CD8-positive, alpha-beta memory T cell (primary cell): ENCODE measurements at regions of chr4 and their contacts with region 1.

Region 1: DNA sequence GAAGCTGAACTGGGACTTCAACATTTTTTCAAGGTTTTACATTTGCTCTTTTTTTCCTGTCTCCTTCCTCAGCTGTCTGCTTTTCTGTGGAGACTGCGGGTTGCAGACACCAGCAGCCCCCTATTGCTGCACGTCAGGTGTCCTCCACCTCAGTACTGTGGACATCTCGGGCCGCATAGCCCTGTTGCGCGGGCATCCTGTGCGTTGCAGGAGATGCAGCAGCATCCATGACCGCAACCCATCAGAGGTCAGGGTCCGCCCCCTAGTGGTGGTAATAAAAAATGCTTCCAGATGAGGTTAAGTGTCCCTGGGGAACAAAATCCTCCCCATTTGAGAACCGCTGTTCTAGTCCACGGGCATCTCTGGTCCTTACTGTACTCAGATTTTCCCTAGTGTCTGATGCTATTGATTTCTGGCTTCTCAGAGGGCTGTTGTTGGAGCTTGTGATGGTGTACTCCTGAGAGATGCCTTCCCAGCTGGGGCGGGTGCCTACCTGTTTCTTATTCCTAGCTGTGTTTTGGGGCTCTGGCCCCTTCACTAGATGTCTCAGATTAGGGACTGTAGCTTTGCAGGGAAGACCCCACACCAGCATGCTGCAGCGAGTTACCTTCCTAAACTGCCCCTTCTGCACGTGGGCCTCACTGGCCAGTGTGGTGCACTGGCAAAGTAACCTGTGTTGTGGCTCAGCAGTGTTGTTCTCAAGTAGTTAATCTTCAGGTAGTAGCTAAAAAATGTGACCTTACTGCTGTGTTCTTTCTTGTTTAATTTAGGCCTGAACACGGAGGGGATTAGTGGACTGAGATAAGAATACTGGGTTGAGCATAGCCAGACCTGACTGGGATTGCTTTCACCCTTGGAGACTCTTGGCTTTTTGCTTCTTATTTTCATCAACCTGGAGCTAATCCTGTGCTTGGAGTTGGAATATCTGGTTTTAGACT is 28.2 kb downstream of the NSD2 start:
- DNase-seq: peak; percentile 51 to 82 (median 68)
- H3K4me3 ChIP-seq: no peak overlapping the region
- H3K4me3 Mint-ChIP-seq: no peak overlapping the region
- H3K27ac ChIP-seq: no peak overlapping the region
- H3K27ac Mint-ChIP-seq: peak overlapping the region in 5 of 8 donors; percentile 4 to 77 (median 66)
- H3K4me1 ChIP-seq: peaks cover 5% of the 10 kb centered on the region
- H3K4me1 Mint-ChIP-seq: peaks cover 9 to 24% (median 14%) of the 10 kb centered on the region in 3 donors
- H3K27me3 ChIP-seq: no peaks in the 10 kb centered on the region
- H3K27me3 Mint-ChIP-seq: peaks cover 0 to 2% of the 10 kb centered on the region in 2 donors

Region 2: DNA sequence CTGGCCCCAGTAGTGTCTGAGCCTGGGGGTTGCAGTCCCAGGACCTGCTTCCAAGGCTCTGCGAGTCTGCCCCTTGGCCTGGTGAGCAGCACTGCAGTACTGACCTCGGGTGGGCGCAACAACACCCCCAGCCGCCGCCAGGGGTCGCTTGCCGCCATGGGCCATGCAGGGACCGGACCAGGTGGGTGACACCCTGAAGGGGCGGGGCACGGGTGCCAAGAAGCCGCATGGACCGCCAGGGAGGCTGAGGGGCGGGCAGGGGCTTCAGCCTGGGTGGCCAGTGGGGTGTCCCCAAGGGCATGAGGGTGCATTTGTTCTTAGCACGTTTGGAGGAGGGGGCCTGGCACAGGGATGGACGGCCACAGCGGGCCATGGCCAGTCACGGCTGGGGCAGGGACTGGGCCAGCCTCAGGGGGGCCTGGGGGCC is 153.1 kb before region 1 on chr4:
- CTCF ChIA-PET with region 1: interaction called, 126 read pairs
- POLR2A ChIA-PET with region 1: no interaction called
- DNase-seq: peak; percentile 60 to 80 (median 68)
- H3K4me3 ChIP-seq: no peak overlapping the region
- H3K4me3 Mint-ChIP-seq: no peak overlapping the region
- H3K27ac ChIP-seq: no peak overlapping the region
- H3K27ac Mint-ChIP-seq: no peak overlapping the region
- H3K4me1 ChIP-seq: no peaks in the 10 kb centered on the region
- H3K4me1 Mint-ChIP-seq: peaks cover 0 to 3% (median 0%) of the 10 kb centered on the region in 3 donors
- H3K27me3 ChIP-seq: no peaks in the 10 kb centered on the region
- H3K27me3 Mint-ChIP-seq: peaks cover 0 to 1% of the 10 kb centered on the region in 2 donors

Region 3: DNA sequence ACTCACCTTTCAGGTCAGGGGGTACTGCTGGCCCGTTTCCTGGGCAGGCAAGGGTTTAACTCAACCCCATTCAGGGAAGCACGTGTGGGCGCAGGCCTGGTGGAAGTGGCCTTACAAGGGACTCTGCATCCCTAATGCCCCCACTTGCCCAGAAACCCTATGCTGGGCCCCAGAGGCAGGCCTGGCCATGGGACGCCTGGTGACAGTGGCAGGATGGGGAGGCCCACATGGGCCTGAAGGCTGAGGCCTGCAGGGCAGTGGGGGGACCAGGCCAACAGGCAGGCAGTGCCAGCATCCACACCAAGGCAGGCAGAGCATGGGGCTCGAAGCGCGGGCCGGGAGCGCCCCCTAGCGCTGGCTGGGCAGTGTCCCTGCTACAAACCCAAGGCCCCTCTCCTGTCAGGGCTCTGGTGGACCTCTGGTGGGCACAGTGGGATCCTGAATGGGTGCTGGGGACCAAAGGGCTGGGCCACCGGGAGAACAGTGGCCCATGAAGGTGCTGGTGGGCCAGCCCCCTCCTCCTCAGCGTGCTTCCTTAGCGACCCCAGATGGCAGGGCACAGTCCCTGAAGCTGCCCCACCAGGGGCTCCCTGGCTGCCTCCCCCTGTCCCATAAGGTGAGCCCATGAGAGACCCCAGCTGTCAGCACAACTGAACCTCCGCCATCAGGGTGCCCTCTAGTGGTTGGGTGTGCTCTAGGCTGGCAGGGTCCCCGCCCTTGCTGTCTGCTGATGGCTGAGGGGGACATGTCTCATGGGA is 89.5 kb before region 1 on chr4:
- CTCF ChIA-PET with region 1: interaction called, 12 read pairs
- POLR2A ChIA-PET with region 1: no interaction called
- DNase-seq: peak; percentile 39 to 64 (median 51)
- H3K4me3 ChIP-seq: no peak overlapping the region
- H3K4me3 Mint-ChIP-seq: no peak overlapping the region
- H3K27ac ChIP-seq: no peak overlapping the region
- H3K27ac Mint-ChIP-seq: no peak overlapping the region
- H3K4me1 ChIP-seq: no peaks in the 10 kb centered on the region
- H3K4me1 Mint-ChIP-seq: no peaks in the 10 kb centered on the region
- H3K27me3 ChIP-seq: no peaks in the 10 kb centered on the region
- H3K27me3 Mint-ChIP-seq: no peaks in the 10 kb centered on the region

Region 4: GRCh38 chr4:1883583-1883982 is 15.8 kb before region 1 on chr4:
- CTCF ChIA-PET with region 1: interaction called, 18 read pairs
- POLR2A ChIA-PET with region 1: no interaction called
- DNase-seq: no peak
- H3K4me3 ChIP-seq: no peak overlapping the region
- H3K4me3 Mint-ChIP-seq: no peak overlapping the region
- H3K27ac ChIP-seq: peak overlapping the region; percentile 21
- H3K27ac Mint-ChIP-seq: peak overlapping the region in 2 of 8 donors; percentile 29 to 83
- H3K4me1 ChIP-seq: no peaks in the 10 kb centered on the region
- H3K4me1 Mint-ChIP-seq: peaks cover 33 to 56% (median 50%) of the 10 kb centered on the region in 3 donors
- H3K27me3 ChIP-seq: no peaks in the 10 kb centered on the region
- H3K27me3 Mint-ChIP-seq: no peaks in the 10 kb centered on the region

Region 5: GRCh38 chr4:1939664-1940509 is 40.5 kb after region 1 on chr4:
- CTCF ChIA-PET with region 1: no interaction called
- POLR2A ChIA-PET with region 1: no interaction called
- DNase-seq: no peak
- H3K4me3 ChIP-seq: no peak overlapping the region
- H3K4me3 Mint-ChIP-seq: no peak overlapping the region
- H3K27ac ChIP-seq: no peak overlapping the region
- H3K27ac Mint-ChIP-seq: peak overlapping the region in 1 of 8 donors; percentile 17
- H3K4me1 ChIP-seq: no peaks in the 10 kb centered on the region
- H3K4me1 Mint-ChIP-seq: no peaks in the 10 kb centered on the region
- H3K27me3 ChIP-seq: no peaks in the 10 kb centered on the region
- H3K27me3 Mint-ChIP-seq: no peaks in the 10 kb centered on the region